Activated CD4-positive, alpha-beta T cell treated with anti-CD3 and anti-CD28 coated beads, Interleukin-2, amount 10 ng/mL, durations not matched to agents 24 days and 14 days (primary cell): ENCODE measurements at regions of chr3 and their contacts with region 1.

Region 1: DNA sequence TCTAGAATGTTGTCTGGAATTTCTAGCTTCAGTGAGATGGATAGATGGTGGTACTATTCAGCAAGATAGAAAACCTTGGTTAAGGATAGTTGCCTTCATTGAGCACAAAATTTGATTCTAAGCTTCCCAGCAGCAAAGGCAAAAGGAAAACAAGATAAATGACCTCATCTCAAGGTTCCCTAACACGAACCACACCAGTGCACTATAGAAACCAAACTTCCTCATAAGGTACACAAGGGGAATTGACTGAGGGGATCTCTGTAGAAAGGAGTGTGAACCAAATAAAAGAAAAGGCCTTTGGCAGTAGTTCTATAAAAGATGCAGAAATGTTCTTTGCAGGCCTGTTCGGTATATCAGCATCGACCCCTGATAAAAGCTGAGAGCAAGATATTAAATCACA is 288.9 kb downstream of the SHQ1 start:
- DNase-seq: no peak
- H3K4me3 Mint-ChIP-seq: no peak overlapping the region
- H3K27ac Mint-ChIP-seq: no peak overlapping the region
- H3K4me1 Mint-ChIP-seq: peaks cover 1% of the 10 kb centered on the region
- H3K27me3 Mint-ChIP-seq: no peaks in the 10 kb centered on the region

Region 2: DNA sequence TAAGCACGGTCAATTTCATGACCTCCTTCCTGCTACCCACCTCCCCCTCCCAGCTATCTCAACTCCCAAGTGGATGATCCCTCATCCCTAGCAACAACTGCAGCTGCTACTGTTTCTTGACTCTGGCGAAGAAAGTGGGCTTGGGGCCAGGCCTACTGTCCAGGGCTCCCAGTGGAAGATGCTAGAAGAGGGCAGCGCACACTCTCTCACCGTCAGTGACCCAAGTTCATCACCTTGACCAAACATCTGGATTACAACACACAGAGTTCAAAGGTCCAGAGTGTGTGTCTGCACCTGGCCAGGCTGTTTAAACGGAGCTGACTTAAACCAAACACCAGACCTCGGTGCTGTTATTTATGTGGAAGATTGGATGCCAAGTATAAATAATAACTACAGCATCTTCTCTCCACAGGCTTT is 96.8 kb before region 1 on chr3:
- intact Hi-C with region 1: no loop called
- DNase-seq: no peak
- H3K4me3 Mint-ChIP-seq: no peak overlapping the region
- H3K27ac Mint-ChIP-seq: no peak overlapping the region
- H3K4me1 Mint-ChIP-seq: peaks cover 3% of the 10 kb centered on the region
- H3K27me3 Mint-ChIP-seq: peaks cover 6% of the 10 kb centered on the region

Region 3: GRCh38 chr3:72591522-72592421 is 32.4 kb after region 1 on chr3:
- intact Hi-C with region 1: loop called (anchors 5 kb)
- DNase-seq: no peak
- H3K4me3 Mint-ChIP-seq: no peak overlapping the region
- H3K27ac Mint-ChIP-seq: no peak overlapping the region
- H3K4me1 Mint-ChIP-seq: peaks cover 6% of the 10 kb centered on the region
- H3K27me3 Mint-ChIP-seq: no peaks in the 10 kb centered on the region